Gastrocnemius medialis (tissue), 4 donors: ENCODE measurements at regions of chr19 and their contacts with region 1.

Region 1: DNA sequence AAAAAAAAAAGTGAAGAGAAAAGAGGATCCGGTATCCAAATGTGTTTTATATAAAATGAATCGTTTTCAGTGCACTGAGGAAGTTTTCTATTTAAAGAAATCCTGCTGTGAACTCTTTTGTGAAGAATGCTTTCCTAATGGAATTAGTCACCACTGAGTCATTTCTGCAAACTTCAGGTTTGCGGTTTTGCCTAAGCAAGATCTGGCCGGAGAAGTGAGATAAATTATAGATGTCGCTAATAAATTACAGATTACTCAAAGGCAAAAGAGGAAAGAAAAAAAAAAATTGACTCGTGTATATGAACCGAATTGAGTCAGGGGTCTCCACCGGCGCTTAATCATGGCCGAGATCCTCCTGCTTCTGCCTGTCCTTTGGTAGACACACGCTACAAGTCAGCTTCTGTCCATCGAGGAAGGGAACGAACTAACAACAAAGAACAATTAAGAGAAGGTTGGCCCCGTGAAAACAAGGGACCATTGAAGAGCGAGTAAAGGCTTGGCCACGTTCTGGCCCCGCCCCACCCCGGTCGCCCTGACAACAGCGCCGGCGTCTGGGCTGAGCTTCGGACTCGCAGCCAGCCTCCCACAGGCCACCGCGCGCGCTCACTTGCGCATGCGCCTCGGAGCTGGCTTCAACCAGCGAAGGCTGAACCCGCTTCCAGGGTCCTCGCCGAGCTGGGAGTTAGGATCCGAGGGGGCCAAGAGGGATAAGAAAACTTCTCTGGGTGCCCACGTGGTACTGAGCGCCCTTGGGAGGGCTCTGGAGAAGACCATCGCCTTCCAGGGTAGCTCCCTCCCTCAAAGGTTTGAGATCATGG is 33.0 kb upstream of the MRI1 start:
- DNase-seq: peak; percentile 84 to 90
- ATAC-seq: peak; percentile 97 to 98
- H3K4me3 ChIP-seq: peak overlapping the region; percentile 61 to 78 (median 66)
- H3K27ac ChIP-seq: peak overlapping the region; percentile 67 to 87 (median 76)
- H3K4me1 ChIP-seq: peaks cover 10% of the 10 kb centered on the region in 2 donors
- H3K27me3 ChIP-seq: no peaks in the 10 kb centered on the region
- CTCF ChIP-seq: no peak
- POLR2A ChIP-seq: no peak

Region 2: GRCh38 chr19:13748169-13748828 is 16.9 kb after region 1 on chr19:
- in situ Hi-C with region 1: no loop called
- intact Hi-C with region 1: loop called (anchors 1 kb)
- DNase-seq: no peak
- ATAC-seq: peak in 1 of 2 donors; percentile 1
- H3K4me3 ChIP-seq: peak overlapping the region; percentile 58 to 99 (median 90)
- H3K27ac ChIP-seq: peak overlapping the region; percentile 86 to 95 (median 90)
- H3K4me1 ChIP-seq: peaks cover 12 to 14% of the 10 kb centered on the region in 2 donors
- H3K27me3 ChIP-seq: no peaks in the 10 kb centered on the region
- CTCF ChIP-seq: no peak
- POLR2A ChIP-seq: no peak

Region 3: GRCh38 chr19:13774217-13775191 is 43.1 kb after region 1 on chr19 and contains the start of gene C19orf53:
- in situ Hi-C with region 1: no loop called
- intact Hi-C with region 1: loop called (anchors 1 kb)
- DNase-seq: peak; percentile 86 to 89
- ATAC-seq: peak; percentile 100
- H3K4me3 ChIP-seq: peak within 1 kb of the TSS; percentile 84 to 100 (median 100)
- H3K27ac ChIP-seq: peak within 1 kb of the TSS; percentile 84 to 97 (median 96)
- H3K4me1 ChIP-seq: peaks cover 14% of the 10 kb centered on the region in 2 donors
- H3K27me3 ChIP-seq: no peaks in the 10 kb centered on the region
- CTCF ChIP-seq: peak in 1 of 5 experiments; percentile 22
- POLR2A ChIP-seq: peak; percentile 72 to 89
- total RNA-seq, gene C19orf53: 158 to 283 (median 222) TPM